ENCODE measurements at regions of chr2 and their contacts with region 1.

Region 1: GRCh38 chr2:204913854-204914464 is 368.7 kb downstream of the PARD3B start:
- DNase-seq: peak; percentile 11 to 85 (median 18)
- ATAC-seq: peak; percentile 89
- H3K4me3 ChIP-seq: peak overlapping the region; percentile 21
- H3K27ac ChIP-seq: peak overlapping the region; percentile 78
- H3K4me1 ChIP-seq: peaks cover 0 to 5% of the 10 kb centered on the region in 2 experiments; a peak in 2 of 5 replicates
- H3K27me3 ChIP-seq: no peaks in the 10 kb centered on the region
- CTCF ChIP-seq: no peak
- EP300 ChIP-seq: no peak
- POLR2A ChIP-seq: peak; percentile 54
- RAD21 ChIP-seq: no peak

Region 2: GRCh38 chr2:204796581-204796980 is 117.4 kb before region 1 on chr2:
- CTCF ChIA-PET with region 1: no interaction called
- POLR2A ChIA-PET with region 1: no interaction called
- in situ Hi-C with region 1: no loop called
- intact Hi-C with region 1: no loop called
- DNase-seq: no peak
- ATAC-seq: no peak
- H3K4me3 ChIP-seq: no peak overlapping the region
- H3K27ac ChIP-seq: no peak overlapping the region
- H3K4me1 ChIP-seq: no peaks in the 10 kb centered on the region
- H3K27me3 ChIP-seq: no peaks in the 10 kb centered on the region
- CTCF ChIP-seq: no peak
- EP300 ChIP-seq: no peak
- POLR2A ChIP-seq: no peak
- RAD21 ChIP-seq: no peak

Region 3: GRCh38 chr2:204982303-204982702 is 68.3 kb after region 1 on chr2:
- CTCF ChIA-PET with region 1: no interaction called
- POLR2A ChIA-PET with region 1: no interaction called
- in situ Hi-C with region 1: no loop called
- intact Hi-C with region 1: loop called (anchors 10 kb)
- DNase-seq: peak; percentile 8 to 54 (median 17)
- ATAC-seq: peak; percentile 80
- H3K4me3 ChIP-seq: no peak overlapping the region
- H3K27ac ChIP-seq: peak overlapping the region; percentile 55
- H3K4me1 ChIP-seq: peaks cover 0 to 11% of the 10 kb centered on the region in 2 experiments; a peak in 3 of 5 replicates
- H3K27me3 ChIP-seq: no peaks in the 10 kb centered on the region
- CTCF ChIP-seq: no peak
- EP300 ChIP-seq: no peak
- POLR2A ChIP-seq: no peak
- RAD21 ChIP-seq: no peak

Region 4: DNA sequence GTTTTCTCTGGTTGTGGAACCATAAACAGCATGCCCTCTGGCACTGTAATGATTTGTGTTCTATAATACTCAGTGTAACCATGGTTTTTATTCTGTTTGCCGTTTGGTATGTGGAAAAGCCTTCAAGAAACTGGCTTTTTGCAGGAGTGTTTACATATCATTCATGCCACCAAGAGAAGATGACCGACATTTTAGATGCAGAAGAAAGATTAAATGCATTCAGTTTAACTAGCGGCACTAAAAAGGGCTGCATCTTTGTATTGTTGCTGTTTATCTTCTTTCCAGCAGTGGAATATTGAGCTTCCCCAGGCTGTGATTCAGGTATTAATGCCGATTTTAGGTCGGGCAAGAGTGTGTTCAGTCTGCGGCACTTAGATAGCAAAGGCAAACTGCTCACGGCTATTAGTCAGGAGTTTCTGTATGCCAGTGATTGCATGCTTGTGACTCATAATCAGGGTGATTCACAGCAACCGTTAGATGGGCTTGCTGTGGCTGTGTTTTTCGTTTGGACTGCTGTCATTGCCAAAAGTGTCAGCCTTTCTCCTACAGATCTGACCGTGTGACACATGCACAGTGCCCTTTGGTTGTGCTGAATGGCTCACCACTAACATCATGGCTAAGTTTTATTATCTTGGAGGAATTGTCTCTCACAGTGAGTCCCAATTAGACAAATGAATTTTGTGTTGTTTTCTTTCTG is 111.0 kb after region 1 on chr2:
- CTCF ChIA-PET with region 1: no interaction called
- POLR2A ChIA-PET with region 1: no interaction called
- in situ Hi-C with region 1: no loop called
- intact Hi-C with region 1: loop called (anchors 10 kb)
- DNase-seq: peak; percentile 46 to 84 (median 60)
- ATAC-seq: peak; percentile 96
- H3K4me3 ChIP-seq: no peak overlapping the region
- H3K27ac ChIP-seq: peak overlapping the region; percentile 73
- H3K4me1 ChIP-seq: peaks cover 0 to 15% of the 10 kb centered on the region in 2 experiments; a peak in 2 of 5 replicates
- H3K27me3 ChIP-seq: no peaks in the 10 kb centered on the region
- CTCF ChIP-seq: no peak
- EP300 ChIP-seq: peak; percentile 97
- POLR2A ChIP-seq: no peak
- RAD21 ChIP-seq: 0 out of 4 replicates have a peak, but pooled peaks of 1 of the 2 experiments have one; percentile 13

Measured in K562 (cell line).